Activated naive CD4-positive, alpha-beta T cell treated with anti-CD3 and anti-CD28 coated beads for 36 hours (primary cell): ENCODE measurements at regions of chr16 and their contacts with region 1.

Region 1: DNA sequence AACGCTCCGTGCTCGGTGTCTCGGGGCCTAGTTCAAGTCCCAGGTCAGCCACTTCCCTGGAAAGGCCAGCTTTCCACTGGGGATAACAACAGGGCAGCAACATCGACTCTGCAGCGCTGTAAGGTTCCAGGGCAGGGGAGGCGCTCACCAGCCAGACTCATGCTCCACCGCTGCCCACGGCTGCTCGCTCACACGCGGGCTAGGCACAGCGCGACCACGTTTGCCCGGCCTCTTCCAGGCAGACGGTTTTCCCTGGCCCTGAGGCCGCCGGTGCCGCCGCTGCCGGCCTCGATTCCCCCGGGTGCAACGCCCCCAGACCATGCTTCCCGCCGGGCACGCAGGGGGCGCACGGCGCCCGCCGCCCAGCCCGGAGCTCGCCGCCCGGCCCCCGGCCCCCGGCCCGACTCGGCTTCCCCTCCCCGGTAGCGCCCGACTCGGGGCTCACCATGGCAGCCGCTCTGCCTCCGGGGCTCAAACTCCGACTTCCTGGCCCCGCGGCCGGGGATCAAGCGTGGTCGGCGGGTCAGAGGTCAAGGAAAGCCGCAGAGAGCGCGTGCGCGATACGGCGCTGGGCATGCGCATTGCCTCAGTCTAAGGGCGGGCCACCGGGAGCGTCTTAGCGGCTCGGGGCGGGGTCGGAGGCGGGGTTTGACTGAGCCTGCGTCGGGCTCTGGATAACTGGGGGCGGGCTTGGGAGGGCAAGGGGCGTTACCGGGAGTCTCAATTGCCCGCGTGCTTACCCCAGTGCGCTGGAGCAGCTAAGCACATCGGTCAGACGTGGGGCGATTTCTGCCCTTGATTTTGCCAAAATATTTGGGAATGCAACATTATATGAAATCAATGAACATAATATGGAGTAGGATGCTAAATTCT is at the start of gene PAM16:
- DNase-seq: peak; percentile 98
- H3K4me3 Mint-ChIP-seq: peak within 1 kb of the TSS; percentile 98
- H3K27ac Mint-ChIP-seq: peak within 1 kb of the TSS; percentile 84
- H3K4me1 Mint-ChIP-seq: peaks cover 40% of the 10 kb centered on the region
- H3K27me3 Mint-ChIP-seq: no peaks in the 10 kb centered on the region
- total RNA-seq, gene PAM16: 67.8 to 71.3 TPM

Region 2: GRCh38 chr16:3999479-4000325 is 351.3 kb before region 1 on chr16:
- CTCF ChIA-PET with region 1: no interaction called
- intact Hi-C with region 1: no loop called
- DNase-seq: peak; percentile 11
- H3K4me3 Mint-ChIP-seq: no peak overlapping the region
- H3K27ac Mint-ChIP-seq: no peak overlapping the region
- H3K4me1 Mint-ChIP-seq: peaks cover 15% of the 10 kb centered on the region
- H3K27me3 Mint-ChIP-seq: no peaks in the 10 kb centered on the region

Region 3: GRCh38 chr16:4307215-4308037 is 43.6 kb before region 1 on chr16:
- CTCF ChIA-PET with region 1: interaction called, 4 read pairs
- intact Hi-C with region 1: loop called (anchors 1 kb)
- DNase-seq: peak; percentile 95
- H3K4me3 Mint-ChIP-seq: peak overlapping the region; percentile 84
- H3K27ac Mint-ChIP-seq: peak overlapping the region; percentile 85
- H3K4me1 Mint-ChIP-seq: peaks cover 24% of the 10 kb centered on the region
- H3K27me3 Mint-ChIP-seq: no peaks in the 10 kb centered on the region

Region 4: GRCh38 chr16:4371357-4372000 is 20.5 kb after region 1 on chr16 and contains the start of gene VASN:
- CTCF ChIA-PET with region 1: no interaction called
- intact Hi-C with region 1: loop called (anchors 2 kb)
- DNase-seq: peak; percentile 58
- H3K4me3 Mint-ChIP-seq: peak within 1 kb of the TSS; percentile 64
- H3K27ac Mint-ChIP-seq: no peak within 1 kb of the TSS
- H3K4me1 Mint-ChIP-seq: peaks cover 4% of the 10 kb centered on the region
- H3K27me3 Mint-ChIP-seq: no peaks in the 10 kb centered on the region
- total RNA-seq, gene VASN: not detected

Region 5: DNA sequence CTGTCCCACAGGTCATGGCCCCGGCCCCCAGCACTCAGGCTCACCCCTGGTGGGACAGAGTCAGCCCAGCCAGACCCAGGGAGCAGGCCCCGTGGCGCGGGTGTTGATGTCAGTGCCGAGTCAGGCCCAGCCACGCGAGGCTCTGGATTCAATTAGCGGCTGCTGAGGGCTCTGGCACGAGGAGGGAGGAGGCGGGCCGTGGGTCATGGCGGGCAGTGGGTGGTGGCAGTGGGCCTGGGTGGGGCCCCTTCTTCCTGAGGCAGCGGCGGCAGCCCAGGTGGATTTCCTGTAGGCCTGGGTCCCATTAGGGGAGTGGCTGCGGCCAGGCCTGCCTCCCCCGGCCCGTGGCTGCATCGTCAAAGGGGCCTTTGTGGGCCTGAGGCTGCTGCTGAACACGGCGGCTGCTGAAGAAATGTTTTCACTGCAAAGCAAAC is 33.5 kb after region 1 on chr16:
- CTCF ChIA-PET with region 1: no interaction called
- intact Hi-C with region 1: no loop called
- DNase-seq: no peak
- H3K4me3 Mint-ChIP-seq: no peak overlapping the region
- H3K27ac Mint-ChIP-seq: no peak overlapping the region
- H3K4me1 Mint-ChIP-seq: no peaks in the 10 kb centered on the region
- H3K27me3 Mint-ChIP-seq: no peaks in the 10 kb centered on the region

Region 6: DNA sequence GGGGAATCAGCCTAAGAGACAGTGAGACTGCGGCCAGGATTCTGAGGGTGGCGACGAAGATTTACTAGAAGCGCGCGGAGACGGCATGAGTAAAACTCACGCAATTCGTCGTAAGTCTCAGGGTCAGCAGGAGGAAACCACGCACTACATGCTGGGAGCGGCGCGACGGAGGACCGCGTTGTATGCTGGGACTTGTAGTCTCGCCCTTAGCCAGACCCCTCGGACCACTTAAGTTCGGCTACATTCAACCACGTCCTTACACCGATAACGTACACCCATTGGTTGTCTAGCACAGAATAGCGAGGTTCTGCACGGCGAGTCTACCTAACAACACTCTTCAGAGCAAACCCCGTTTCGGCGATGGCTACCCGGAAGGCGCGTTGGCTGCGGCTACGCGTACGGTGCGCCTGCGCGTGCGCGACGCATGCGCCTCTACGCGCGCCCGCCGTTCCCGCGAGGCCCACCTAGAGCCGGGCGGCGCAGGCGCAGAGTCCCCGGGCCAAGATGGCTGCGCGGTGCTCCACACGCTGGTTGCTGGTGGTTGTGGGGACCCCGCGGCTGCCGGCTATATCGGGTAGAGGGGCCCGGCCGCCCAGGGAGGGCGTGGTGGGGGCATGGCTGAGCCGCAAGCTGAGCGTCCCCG is 74.5 kb after region 1 on chr16 and contains the start of gene DNAJA3:
- CTCF ChIA-PET with region 1: no interaction called
- intact Hi-C with region 1: loop called (anchors 1 kb)
- DNase-seq: peak; percentile 93
- H3K4me3 Mint-ChIP-seq: peak within 1 kb of the TSS; percentile 99
- H3K27ac Mint-ChIP-seq: peak within 1 kb of the TSS; percentile 100
- H3K4me1 Mint-ChIP-seq: peaks cover 39% of the 10 kb centered on the region
- H3K27me3 Mint-ChIP-seq: no peaks in the 10 kb centered on the region
- total RNA-seq, gene DNAJA3: 86.7 to 88.0 TPM

Region 7: DNA sequence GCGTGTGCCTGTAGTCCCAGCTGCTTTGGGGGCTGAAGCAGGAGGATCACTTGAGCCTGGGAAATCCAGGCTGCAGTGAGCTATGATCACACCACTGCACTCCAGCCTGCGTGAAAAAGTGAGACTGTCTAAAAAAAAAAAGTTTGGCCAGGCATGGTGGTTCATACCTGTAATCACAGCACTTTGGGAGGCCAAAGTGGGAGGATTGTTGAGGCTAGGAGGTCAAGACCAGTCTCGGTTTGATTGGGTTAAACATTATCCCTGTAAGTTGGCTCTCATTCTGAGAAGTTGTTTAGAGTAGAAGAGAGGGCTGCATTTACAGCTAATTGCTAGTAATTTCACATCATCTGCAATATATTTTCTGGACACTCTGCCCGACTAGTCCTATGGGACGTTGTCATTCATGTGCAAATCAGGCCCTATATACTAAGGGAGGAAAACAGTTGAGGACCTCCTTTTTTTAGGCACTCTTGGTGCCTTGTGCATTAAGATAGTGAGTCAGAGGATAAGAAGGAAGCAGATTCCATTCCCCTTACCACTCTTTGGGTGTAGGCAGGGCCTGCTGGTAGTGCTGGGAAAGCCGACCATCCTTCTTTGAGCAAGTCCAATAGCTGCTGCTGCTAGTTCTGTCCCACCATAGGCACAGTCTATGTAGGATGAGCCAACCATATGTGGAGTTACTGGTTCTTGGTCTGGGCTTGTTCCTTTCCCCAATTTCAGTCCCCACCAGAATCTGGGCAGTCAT is 143.9 kb after region 1 on chr16:
- CTCF ChIA-PET with region 1: no interaction called
- intact Hi-C with region 1: no loop called
- DNase-seq: no peak
- H3K4me3 Mint-ChIP-seq: no peak overlapping the region
- H3K27ac Mint-ChIP-seq: peak overlapping the region; percentile 56
- H3K4me1 Mint-ChIP-seq: peaks cover 82% of the 10 kb centered on the region
- H3K27me3 Mint-ChIP-seq: no peaks in the 10 kb centered on the region

Region 8: GRCh38 chr16:4538350-4539235 is 187.6 kb after region 1 on chr16 and contains the start of gene CDIP1:
- CTCF ChIA-PET with region 1: no interaction called
- intact Hi-C with region 1: loop called (anchors 5 kb)
- DNase-seq: peak; percentile 99
- H3K4me3 Mint-ChIP-seq: peak within 1 kb of the TSS; percentile 77
- H3K27ac Mint-ChIP-seq: peak within 1 kb of the TSS; percentile 54
- H3K4me1 Mint-ChIP-seq: peaks cover 41% of the 10 kb centered on the region
- H3K27me3 Mint-ChIP-seq: no peaks in the 10 kb centered on the region
- total RNA-seq, gene CDIP1: 31.9 to 35.7 TPM

Region 9: DNA sequence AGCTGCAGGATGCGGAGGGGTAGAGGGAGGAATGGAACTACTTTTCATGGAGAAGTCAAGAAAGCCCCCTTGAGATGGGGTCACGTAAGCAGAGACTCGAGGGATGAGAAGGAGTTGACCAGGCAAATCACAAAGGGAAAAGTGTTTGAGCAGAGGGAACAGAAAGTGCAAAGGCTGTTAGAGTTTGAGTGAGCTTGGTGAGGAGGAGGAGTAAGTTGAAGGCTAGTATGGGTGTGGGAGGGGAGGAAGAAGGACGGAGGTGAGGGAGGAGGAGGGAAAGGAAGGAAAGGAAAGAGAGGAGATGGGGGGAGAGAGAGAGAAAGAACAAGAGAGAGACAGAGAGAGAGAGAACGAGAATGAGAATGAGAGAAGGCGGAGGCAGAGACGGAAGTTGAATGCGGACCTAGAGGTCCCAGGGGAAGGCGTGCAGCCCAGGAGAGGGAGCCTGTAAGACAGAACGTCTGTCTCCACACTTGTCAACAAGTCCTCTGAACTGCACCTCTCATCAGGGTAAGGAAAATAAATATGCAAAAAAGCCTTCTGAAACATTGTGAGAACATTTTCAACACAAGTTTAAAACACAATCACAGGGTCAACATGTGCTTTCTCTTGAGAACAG is 1026.4 kb after region 1 on chr16:
- CTCF ChIA-PET with region 1: no interaction called
- intact Hi-C with region 1: no loop called
- DNase-seq: no peak
- H3K4me3 Mint-ChIP-seq: no peak overlapping the region
- H3K27ac Mint-ChIP-seq: no peak overlapping the region
- H3K4me1 Mint-ChIP-seq: no peaks in the 10 kb centered on the region
- H3K27me3 Mint-ChIP-seq: peaks cover 10% of the 10 kb centered on the region